K562 (cell line): ENCODE measurements at regions of chr16 and their contacts with region 1.

Region 1: GRCh38 chr16:66406534-66407221 is 20.4 kb upstream of the BEAN1 start:
- DNase-seq: peak; percentile 81 to 86 (median 84)
- ATAC-seq: peak; percentile 97
- H3K4me3 ChIP-seq: peak overlapping the region; percentile 33
- H3K27ac ChIP-seq: no peak overlapping the region
- H3K4me1 ChIP-seq: peaks cover 0 to 14% of the 10 kb centered on the region in 2 experiments; a peak in 3 of 5 replicates
- H3K27me3 ChIP-seq: peaks cover 10 to 23% of the 10 kb centered on the region in 2 experiments; a peak in 4 of 5 replicates
- CTCF ChIP-seq: peak; percentile 88 to 93 (median 89)
- EP300 ChIP-seq: no peak
- POLR2A ChIP-seq: no peak
- RAD21 ChIP-seq: peak; percentile 89 to 94

Region 2: GRCh38 chr16:66386629-66387622 is 19.8 kb before region 1 on chr16:
- CTCF ChIA-PET with region 1: no interaction called
- POLR2A ChIA-PET with region 1: no interaction called
- in situ Hi-C with region 1: no loop called
- intact Hi-C with region 1: no loop called
- DNase-seq: no peak
- ATAC-seq: no peak
- H3K4me3 ChIP-seq: no peak overlapping the region
- H3K27ac ChIP-seq: no peak overlapping the region
- H3K4me1 ChIP-seq: no peaks in the 10 kb centered on the region; a peak in 1 of 5 replicates
- H3K27me3 ChIP-seq: peaks cover 3 to 37% of the 10 kb centered on the region in 2 experiments; a peak in 4 of 5 replicates
- CTCF ChIP-seq: no peak
- EP300 ChIP-seq: no peak
- POLR2A ChIP-seq: no peak
- RAD21 ChIP-seq: no peak

Region 3: GRCh38 chr16:66483689-66484481 is 77.2 kb after region 1 on chr16:
- CTCF ChIA-PET with region 1: interaction called, 13 read pairs
- POLR2A ChIA-PET with region 1: no interaction called
- in situ Hi-C with region 1: loop called (anchors 5 kb)
- intact Hi-C with region 1: loop called (anchors 1 kb)
- DNase-seq: peak; percentile 81 to 90 (median 88)
- ATAC-seq: peak; percentile 94
- H3K4me3 ChIP-seq: no peak overlapping the region
- H3K27ac ChIP-seq: no peak overlapping the region
- H3K4me1 ChIP-seq: peaks cover 2 to 5% of the 10 kb centered on the region in 2 experiments; a peak in 3 of 5 replicates
- H3K27me3 ChIP-seq: peaks cover 0 to 11% of the 10 kb centered on the region in 2 experiments; a peak in 2 of 5 replicates
- CTCF ChIP-seq: peak; percentile 96 to 98 (median 96)
- EP300 ChIP-seq: no peak
- POLR2A ChIP-seq: no peak
- RAD21 ChIP-seq: peak; percentile 81 to 91

Region 4: DNA sequence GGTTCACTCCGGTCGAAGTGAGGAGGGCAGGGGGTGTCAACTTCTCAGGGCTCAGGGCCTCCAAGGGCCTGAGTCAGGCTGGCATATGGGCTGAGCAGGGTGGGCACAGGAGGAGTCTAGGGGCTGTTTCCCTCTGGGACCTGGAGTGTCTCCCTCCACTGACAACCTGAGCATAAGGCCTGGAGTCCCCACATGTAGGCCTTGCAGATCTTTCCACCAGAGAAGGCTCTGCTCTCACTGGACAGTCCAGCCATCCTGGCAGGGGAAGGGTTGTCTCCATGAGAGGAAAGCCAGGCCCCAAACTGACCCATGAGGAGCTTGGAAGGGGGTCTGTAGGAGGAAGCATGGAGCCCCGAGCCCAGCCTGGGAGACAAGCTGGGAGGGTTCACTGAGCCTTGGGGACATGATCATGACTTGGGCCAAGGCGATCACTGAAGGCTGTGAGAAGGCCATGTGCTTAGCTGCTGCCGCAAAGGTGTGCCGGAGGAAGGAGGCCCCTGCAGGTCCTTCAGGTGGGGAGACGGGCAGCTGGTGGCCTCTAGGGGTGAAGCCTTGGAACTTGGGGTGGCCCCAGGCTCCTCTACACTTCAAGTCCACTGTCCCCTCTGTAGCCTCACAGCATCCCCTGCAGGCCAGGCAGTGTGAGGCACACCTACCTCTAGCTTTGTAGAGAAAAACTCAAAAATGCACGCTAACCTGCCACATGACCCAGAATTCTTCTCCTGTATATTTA is 182.5 kb after region 1 on chr16:
- CTCF ChIA-PET with region 1: interaction called, 22 read pairs
- POLR2A ChIA-PET with region 1: interaction called, 3 read pairs
- in situ Hi-C with region 1: loop called (anchors 5 kb)
- intact Hi-C with region 1: loop called (anchors 1 kb)
- DNase-seq: peak; percentile 72 to 82 (median 80)
- ATAC-seq: peak; percentile 99
- H3K4me3 ChIP-seq: no peak overlapping the region
- H3K27ac ChIP-seq: no peak overlapping the region
- H3K4me1 ChIP-seq: no peaks in the 10 kb centered on the region; a peak in 1 of 5 replicates
- H3K27me3 ChIP-seq: no peaks in the 10 kb centered on the region
- CTCF ChIP-seq: peak; percentile 97 to 99 (median 98)
- EP300 ChIP-seq: no peak
- POLR2A ChIP-seq: no peak
- RAD21 ChIP-seq: peak; percentile 97 to 98

Region 5: DNA sequence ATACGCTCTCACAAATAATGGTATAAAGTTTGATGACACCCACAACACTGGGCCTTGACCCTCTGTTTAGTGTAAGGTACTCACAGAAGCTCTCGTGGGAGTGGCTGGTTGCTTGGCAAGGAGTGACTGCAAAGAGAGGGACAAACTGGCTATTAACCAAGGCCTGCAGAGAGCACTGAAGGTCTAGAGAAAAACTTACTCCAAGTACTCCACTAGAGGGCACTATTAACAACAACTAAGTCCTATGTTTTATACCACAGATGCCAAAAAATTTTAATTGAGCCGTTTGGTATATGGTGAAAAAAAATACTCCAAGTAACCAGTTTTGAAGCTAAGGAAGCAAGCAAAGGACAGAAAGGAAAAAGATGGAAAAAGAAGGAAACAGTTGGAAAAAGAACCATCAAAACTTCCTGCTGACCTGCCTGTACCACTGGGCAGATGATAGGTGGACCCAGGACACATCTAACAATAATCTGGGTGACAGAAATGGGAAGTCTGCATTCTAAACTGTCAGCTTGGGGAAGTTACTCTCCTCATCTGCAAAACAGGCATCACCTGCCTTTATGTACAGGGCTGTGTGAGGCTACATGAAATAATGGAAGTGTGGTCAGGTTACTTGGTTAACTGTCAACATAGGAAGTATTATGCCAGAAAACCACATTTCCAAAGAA is 321.6 kb after region 1 on chr16:
- CTCF ChIA-PET with region 1: no interaction called
- POLR2A ChIA-PET with region 1: no interaction called
- in situ Hi-C with region 1: no loop called
- intact Hi-C with region 1: loop called (anchors 10 kb)
- DNase-seq: peak; percentile 47 to 66 (median 54)
- ATAC-seq: peak; percentile 92
- H3K4me3 ChIP-seq: no peak overlapping the region
- H3K27ac ChIP-seq: no peak overlapping the region
- H3K4me1 ChIP-seq: no peaks in the 10 kb centered on the region
- H3K27me3 ChIP-seq: no peaks in the 10 kb centered on the region
- CTCF ChIP-seq: peak; percentile 63 to 73 (median 71)
- EP300 ChIP-seq: no peak
- POLR2A ChIP-seq: no peak
- RAD21 ChIP-seq: peak; percentile 35 to 58; a peak in 3 of 4 replicates

Region 6: DNA sequence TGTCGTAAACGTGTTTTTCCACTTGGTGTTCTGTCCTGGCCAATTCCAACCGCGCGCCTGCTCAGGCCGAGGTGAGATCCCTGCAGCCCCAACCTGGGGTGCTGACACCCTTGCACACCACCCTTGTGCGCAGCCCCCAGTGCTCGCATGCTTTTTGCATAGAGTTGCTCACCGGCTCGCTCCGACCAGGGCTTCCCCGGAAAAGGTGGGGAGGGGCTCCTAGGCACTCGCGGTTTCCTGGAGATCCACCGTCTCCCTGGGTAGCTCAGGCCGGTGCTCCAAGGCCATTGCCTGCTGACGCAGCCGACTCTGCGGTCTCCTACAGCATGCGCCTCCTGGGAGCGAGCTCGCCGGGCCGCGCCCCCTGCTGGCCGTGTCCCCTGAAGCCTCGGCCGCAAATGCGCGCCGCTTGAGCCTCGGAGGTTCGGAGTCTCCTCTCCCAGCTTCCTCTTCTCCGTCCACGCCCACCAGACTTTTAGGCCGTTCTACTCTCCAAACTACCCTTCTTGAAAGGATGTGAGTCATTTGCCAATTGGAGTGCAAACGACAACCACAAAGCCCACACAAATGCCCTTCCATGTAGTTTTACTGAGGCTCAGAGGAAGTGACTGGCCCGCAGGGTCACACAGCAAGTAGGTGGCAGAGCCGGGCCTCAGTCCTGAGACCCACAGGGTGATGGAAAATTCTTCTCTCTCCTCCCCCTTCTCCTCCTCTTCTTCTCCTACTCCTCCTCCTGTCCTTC is 466.4 kb after region 1 on chr16:
- CTCF ChIA-PET with region 1: interaction called, 4 read pairs
- POLR2A ChIA-PET with region 1: interaction called, 3 read pairs
- in situ Hi-C with region 1: loop called (anchors 10 kb)
- intact Hi-C with region 1: loop called (anchors 2 kb)
- DNase-seq: peak; percentile 81 to 95 (median 86)
- ATAC-seq: peak; percentile 98
- H3K4me3 ChIP-seq: peak overlapping the region; percentile 20
- H3K27ac ChIP-seq: peak overlapping the region; percentile 68
- H3K4me1 ChIP-seq: peaks cover 6 to 16% of the 10 kb centered on the region in 2 experiments; a peak in 4 of 5 replicates
- H3K27me3 ChIP-seq: no peaks in the 10 kb centered on the region
- CTCF ChIP-seq: peak; percentile 94 to 97 (median 95)
- EP300 ChIP-seq: peak; percentile 4; the same call in 1 of the 2 replicates
- POLR2A ChIP-seq: peak; percentile 55; the same call in 1 of the 2 replicates
- RAD21 ChIP-seq: peak; percentile 49 to 72